ENCODE measurements at regions of chr20 and their contacts with region 1.

Region 1: DNA sequence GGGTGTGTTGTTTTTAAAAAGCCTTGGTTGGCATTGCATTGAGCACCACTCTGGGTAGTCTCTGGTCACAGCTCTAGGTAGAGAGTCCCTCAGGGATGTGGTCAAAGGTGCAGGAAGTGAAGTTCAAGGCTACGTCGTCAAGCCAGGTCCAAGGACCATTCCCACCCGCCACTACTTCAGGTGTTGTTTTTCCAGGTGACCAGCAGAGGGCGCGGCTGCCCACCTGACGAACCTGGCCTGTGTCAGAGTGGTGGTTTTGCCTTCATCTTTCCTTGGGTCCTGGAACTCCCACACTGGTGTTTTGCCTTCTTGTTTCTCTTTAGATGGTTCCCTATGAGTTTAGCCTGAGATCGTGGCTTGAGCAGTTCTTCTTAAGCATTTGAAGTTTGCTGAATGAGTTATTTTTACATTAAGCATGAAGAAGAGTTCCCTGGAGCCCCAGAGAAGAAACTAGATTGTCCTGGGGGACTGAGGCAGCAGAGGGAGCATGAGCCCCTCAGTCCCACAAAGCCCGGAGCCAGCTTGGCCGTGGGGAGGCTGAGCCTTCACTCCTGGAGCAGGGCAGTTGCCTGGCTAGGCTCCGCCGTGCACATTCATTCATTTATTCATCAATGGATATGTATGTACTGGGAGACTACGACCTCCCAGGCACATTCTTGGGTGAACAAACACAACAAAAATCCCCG is 5.6 kb upstream of the PHACTR3 start:
- DNase-seq: no peak
- H3K4me3 Mint-ChIP-seq: no peak overlapping the region
- H3K27ac Mint-ChIP-seq: no peak overlapping the region
- H3K4me1 Mint-ChIP-seq: no peaks in the 10 kb centered on the region
- H3K27me3 Mint-ChIP-seq: peaks cover 35% of the 10 kb centered on the region

Region 2: GRCh38 chr20:59628171-59628570 is 29.4 kb after region 1 on chr20:
- intact Hi-C with region 1: no loop called
- DNase-seq: no peak
- H3K4me3 Mint-ChIP-seq: no peak overlapping the region
- H3K27ac Mint-ChIP-seq: no peak overlapping the region
- H3K4me1 Mint-ChIP-seq: no peaks in the 10 kb centered on the region
- H3K27me3 Mint-ChIP-seq: no peaks in the 10 kb centered on the region

Region 3: DNA sequence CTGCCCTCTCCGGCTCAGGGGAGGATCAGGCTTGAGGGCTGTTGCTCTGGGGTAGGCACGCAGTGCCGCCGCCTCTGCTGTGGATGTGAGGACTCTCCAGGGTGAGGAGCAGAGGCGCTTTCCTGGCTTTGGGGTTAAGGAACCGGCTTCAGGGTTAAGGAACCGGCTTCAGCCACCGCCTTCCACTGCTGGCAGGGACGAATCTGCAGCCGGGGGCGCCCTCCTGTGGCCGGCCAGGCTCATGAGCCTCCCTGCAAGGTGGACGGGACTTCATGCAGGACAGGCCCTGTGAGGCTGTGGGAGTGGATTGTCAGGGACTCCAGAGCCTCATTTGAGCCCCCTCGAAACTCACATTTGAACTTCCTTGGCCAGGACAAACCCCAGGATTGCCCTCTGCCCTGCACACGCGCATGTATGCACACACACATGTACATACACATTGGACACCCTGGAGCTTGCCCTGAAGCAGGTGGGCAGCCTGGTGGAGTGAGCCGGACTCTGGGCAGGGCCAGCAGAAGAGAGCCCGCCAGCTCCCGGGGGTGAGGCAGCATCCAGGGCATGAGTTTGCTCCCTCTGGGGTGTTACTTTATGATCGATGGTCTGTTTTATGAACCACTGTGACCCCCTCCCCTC is 152.4 kb after region 1 on chr20:
- intact Hi-C with region 1: loop called (anchors 2 kb)
- DNase-seq: no peak
- H3K4me3 Mint-ChIP-seq: no peak overlapping the region
- H3K27ac Mint-ChIP-seq: no peak overlapping the region
- H3K4me1 Mint-ChIP-seq: no peaks in the 10 kb centered on the region
- H3K27me3 Mint-ChIP-seq: peaks cover 4% of the 10 kb centered on the region

Region 4: DNA sequence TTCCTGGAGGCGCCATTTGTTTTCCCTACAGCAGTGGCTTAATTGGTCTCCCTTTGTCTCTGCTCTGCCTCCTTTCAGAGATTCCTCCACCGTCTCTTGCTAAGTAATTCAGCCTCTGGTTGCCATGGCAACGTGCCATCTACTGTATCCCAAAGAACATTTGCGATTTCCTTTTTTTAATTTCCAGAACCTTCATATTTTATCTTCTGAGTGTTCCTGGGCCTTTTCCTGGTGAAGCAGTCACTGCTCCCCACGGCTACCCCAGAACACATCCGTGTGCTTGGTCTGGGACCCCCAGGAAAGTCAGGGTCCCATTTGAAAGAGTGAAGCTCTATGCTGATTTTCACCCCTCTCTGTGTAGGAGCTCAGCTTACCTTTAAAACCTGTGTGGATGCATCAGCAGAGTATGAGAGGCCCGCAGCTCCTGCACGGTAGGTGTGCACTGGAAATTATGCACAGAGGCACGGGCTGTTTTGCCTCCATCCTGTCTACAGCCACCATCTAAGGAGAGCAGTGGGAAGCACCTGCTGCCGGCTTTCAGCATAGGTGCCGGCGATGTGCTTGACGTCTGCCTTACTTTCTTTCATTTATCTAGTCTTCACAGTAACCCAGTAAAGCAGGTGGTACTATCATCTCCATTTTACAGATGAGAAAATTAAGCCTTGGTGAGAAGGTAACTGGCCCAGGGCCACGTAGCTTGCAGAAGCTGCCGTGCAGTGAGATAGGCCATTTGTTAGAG is 211.8 kb after region 1 on chr20:
- intact Hi-C with region 1: no loop called
- DNase-seq: no peak
- H3K4me3 Mint-ChIP-seq: no peak overlapping the region
- H3K27ac Mint-ChIP-seq: no peak overlapping the region
- H3K4me1 Mint-ChIP-seq: no peaks in the 10 kb centered on the region
- H3K27me3 Mint-ChIP-seq: no peaks in the 10 kb centered on the region

Measured in activated T-helper 1 cell treated with anti-CD3 and anti-CD28 coated beads, Interleukin-12 subunit alpha, Interleukin-12 subunit beta, Interleukin-2, Interleukin-4 antibody, amounts not matched to agents 30 ng/mL and 10 ng/mL and 1 ng/mL, durations not matched to agents 14 hours and 24 hours and 36 hours (primary cell).